ENCODE measurements at regions of chr10 and their contacts with region 1.

Region 1: GRCh38 chr10:70758757-70759514 is 26.2 kb downstream of the TBATA start:
- DNase-seq: no peak
- ATAC-seq: peak; percentile 42

Region 2: GRCh38 chr10:70478191-70479164 is 280.5 kb before region 1 on chr10 and contains the start of gene PALD1:
- intact Hi-C with region 1: no loop called
- DNase-seq: peak; percentile 85
- ATAC-seq: peak; percentile 59
- total RNA-seq, gene PALD1: 5.1 TPM

Region 3: GRCh38 chr10:70549962-70550458 is 208.9 kb before region 1 on chr10:
- intact Hi-C with region 1: loop called (anchors 1 kb)
- DNase-seq: no peak
- ATAC-seq: peak; percentile 70

Region 4: GRCh38 chr10:70558871-70559810 is 199.8 kb before region 1 on chr10:
- intact Hi-C with region 1: loop called (anchors 2 kb)
- DNase-seq: no peak
- ATAC-seq: peak; percentile 79

Region 5: DNA sequence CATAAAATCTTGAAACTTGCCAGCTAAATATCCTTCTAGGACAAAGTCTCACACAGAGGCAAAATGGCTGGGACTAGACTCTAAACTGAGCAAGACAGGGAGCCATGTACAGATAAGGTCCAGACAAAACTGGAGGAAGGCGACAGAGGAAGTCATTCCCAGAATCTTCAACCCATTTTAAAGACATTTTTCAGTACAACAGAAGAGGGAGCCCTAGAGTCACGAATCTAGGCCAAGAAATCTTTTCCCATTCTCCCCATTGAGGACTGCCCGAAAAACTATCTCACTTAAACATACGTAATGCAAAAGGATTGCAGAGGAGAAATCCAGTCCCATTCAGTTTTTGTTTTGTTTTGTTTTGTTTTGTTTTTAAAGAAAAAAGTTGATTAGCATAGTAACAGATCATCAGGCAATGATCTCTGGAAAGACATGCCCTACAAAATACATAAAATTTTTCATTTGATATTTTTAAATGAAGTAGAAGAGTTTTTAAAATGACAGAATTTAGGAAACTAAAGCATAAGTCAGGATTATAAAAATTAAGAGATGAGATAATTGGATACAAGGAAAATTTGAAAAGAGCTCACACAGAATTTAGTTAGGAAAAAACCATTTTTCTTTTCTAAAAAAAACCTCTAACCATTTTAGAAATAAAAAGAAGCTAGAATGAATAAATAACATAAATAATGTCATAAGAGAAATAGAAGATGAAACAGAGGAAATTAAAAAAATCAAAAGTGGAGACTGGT is 139.5 kb before region 1 on chr10:
- intact Hi-C with region 1: loop called (anchors 2 kb)
- DNase-seq: no peak
- ATAC-seq: no peak

Region 6: DNA sequence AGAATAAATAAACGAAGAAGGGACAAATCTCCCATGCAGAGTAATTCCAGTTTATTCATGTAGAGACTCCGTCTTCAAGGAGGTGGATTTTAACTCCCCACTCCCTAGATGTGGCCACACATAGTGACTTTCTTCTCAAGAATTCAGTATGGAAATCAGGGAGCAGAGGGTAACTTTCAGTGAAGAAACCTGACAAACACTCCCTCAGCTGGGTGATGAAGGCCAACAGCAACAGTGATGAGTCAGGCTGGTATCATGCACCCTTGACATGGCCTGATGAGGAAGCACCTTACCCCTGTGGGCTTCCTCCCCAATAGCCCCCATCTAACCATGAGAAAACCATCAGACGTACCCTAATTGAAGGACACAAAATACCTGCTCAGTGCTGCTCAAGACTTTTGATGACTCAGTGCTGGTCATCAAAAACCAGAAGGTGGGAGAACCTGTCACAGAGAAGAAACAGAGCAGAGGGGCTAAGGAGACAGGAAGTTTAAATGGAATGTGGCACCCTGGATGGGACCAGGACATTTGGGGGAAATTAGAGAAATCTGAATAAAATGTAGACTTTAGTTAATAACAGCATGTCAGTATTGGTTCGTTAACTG is 36.0 kb before region 1 on chr10:
- intact Hi-C with region 1: no loop called
- DNase-seq: no peak
- ATAC-seq: no peak

Region 7: DNA sequence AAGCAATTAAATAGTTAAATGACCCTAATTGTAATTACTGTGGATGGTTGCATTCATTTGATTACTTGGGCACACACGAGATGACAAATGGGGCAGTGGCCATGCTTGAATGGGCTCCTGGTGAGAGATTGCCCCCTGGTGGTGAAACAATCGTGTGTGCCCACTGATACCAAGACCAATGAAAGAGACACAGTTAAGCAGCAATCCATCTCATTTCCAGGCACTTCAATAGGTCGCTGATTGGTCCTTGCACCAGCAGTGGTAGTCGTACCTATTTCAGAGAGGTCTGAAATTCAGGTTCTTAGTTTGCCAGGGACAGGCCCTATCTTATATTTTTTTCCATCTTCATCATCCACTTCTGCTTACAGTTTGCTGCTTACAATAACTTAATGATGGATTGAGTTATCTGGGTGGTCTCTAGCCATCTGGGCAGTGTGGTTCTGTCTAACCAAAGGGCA is 121.2 kb after region 1 on chr10:
- intact Hi-C with region 1: loop called (anchors 1 kb)
- DNase-seq: peak; percentile 79
- ATAC-seq: peak; percentile 67

Measured in Right ventricle myocardium inferior (tissue), 1 donor.